ENCODE measurements at regions of chr2 and their contacts with region 1.

Region 1: GRCh38 chr2:96868555-96869280 is 1.2 kb downstream of the SEMA4C start:
- DNase-seq: peak; percentile 92
- H3K4me3 ChIP-seq: peak overlapping the region; percentile 86
- H3K27ac ChIP-seq: peak overlapping the region; percentile 75
- H3K4me1 ChIP-seq: peaks cover 15% of the 10 kb centered on the region
- H3K27me3 ChIP-seq: no peaks in the 10 kb centered on the region

Region 2: DNA sequence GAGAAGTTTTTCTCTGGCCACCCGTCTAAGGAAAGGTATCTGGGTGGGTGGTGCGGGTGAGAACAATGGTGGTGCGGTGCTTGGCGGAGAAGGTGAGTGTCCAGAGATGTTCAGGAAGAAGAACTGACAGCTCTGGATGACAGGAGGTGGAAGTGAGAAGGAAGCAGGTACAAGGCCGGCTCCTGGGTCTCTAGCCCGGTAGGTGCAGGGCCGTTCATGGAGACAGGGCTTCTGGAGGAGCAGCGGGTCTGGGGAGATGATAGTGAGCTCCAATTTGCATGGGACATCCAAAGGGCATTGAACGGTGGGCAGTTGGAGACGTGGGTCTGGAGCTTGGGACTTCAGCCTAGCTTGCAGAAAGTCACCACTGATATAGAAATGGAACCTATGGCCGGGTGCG is 226.9 kb after region 1 on chr2:
- in situ Hi-C with region 1: loop called (anchors 25 kb)
- DNase-seq: no peak
- H3K4me3 ChIP-seq: no peak overlapping the region
- H3K27ac ChIP-seq: no peak overlapping the region
- H3K4me1 ChIP-seq: no peaks in the 10 kb centered on the region
- H3K27me3 ChIP-seq: peaks cover 6% of the 10 kb centered on the region; the same call in 1 of the 2 replicates

Region 3: DNA sequence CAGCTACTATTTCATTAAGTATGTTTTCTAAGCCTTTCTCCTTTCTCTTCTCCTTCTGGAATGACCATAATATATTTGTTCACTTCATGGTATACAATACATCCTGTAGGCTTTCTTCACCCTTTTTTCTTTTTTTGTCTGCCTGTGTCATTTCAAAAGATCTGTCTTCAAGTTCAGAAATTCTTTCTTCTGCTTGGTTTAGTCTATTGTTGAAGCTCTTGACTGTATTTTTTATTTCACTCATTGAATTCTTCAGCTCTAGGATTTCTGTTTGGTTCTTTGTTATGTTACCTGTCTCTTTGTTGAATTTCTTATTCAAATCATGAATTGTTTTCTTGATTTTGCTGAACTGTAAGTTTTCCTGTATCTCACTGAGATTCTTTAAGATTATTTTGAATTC is 1017.1 kb after region 1 on chr2:
- in situ Hi-C with region 1: no loop called
- DNase-seq: no peak
- H3K4me3 ChIP-seq: no peak overlapping the region
- H3K27ac ChIP-seq: no peak overlapping the region
- H3K4me1 ChIP-seq: no peaks in the 10 kb centered on the region
- H3K27me3 ChIP-seq: no peaks in the 10 kb centered on the region

Measured in GM23248 (cell line).